Vagina (tissue), 2 donors: ENCODE measurements at regions of chrX and their contacts with region 1.

Region 1: DNA sequence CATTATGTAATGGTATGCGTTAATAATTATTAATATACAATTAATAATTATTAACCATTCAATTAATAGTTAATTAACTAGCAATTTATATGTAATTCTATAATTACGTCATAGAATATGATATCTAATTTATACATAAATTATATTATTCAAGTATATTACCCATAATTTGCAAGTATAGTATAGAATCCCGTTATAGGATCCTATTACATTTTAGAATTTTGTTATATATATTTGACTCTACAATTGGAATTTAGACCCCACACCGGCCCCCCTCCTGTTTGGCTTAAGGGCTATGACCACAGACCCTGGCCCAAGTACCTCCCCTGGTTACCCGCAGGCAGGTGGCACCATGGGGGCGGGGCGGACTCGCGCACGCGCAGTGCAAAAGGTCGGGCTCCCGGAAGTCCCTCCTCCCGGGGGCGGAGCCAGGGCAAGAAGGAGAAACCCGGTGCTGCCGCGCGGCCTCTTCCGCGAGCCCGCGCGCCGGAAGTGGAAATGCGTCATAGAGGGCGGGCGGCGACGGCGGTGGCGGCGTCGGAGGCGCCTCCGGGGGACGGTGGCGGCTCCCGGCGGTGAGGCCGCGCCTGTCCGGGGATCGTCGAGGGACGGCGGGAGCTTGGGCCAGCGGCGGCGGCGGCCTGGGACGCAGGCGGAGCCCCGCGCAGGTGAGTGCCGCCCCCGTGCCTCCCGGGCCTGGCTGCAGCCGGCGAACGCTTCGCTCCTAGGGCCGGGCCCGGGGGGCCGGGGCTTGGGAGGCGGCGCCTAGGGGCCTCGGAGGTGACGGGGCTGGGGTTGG is at the start of gene AKAP17A:
- DNase-seq: peak in 1 of 2 donors; percentile 97
- H3K4me3 ChIP-seq: peak within 1 kb of the TSS; percentile 85 to 94
- H3K27ac ChIP-seq: peak within 1 kb of the TSS; percentile 76
- H3K4me1 ChIP-seq: peaks cover 27% of the 10 kb centered on the region
- H3K27me3 ChIP-seq: no peaks in the 10 kb centered on the region
- CTCF ChIP-seq: peak in 1 of 3 experiments; percentile 11
- POLR2A ChIP-seq: peak in 1 of 2 donors; percentile 63
- total RNA-seq, gene AKAP17A: 49.8 TPM

Region 2: GRCh38 chrX:1391707-1392375 is 199.5 kb before region 1 on chrX and contains the start of gene SLC25A6:
- intact Hi-C with region 1: loop called (anchors 5 kb)
- DNase-seq: peak in 1 of 2 donors; percentile 99
- H3K4me3 ChIP-seq: peak within 1 kb of the TSS; percentile 100
- H3K27ac ChIP-seq: peak within 1 kb of the TSS; percentile 98
- H3K4me1 ChIP-seq: peaks cover 43% of the 10 kb centered on the region
- H3K27me3 ChIP-seq: no peaks in the 10 kb centered on the region
- CTCF ChIP-seq: peak in 1 of 3 experiments; percentile 17
- POLR2A ChIP-seq: peak in 1 of 2 donors; percentile 63
- total RNA-seq, gene SLC25A6: 442 TPM

Region 3: GRCh38 chrX:1453951-1454785 is 137.1 kb before region 1 on chrX:
- intact Hi-C with region 1: loop called (anchors 10 kb)
- DNase-seq: peak; percentile 89 to 93
- H3K4me3 ChIP-seq: peak overlapping the region; percentile 90 to 96
- H3K27ac ChIP-seq: peak overlapping the region; percentile 85
- H3K4me1 ChIP-seq: peaks cover 25% of the 10 kb centered on the region
- H3K27me3 ChIP-seq: no peaks in the 10 kb centered on the region
- CTCF ChIP-seq: peak; percentile 73 to 94 (median 93)
- POLR2A ChIP-seq: peak in 1 of 2 donors; percentile 10